GM18951 (cell line): ENCODE measurements at regions of chr19 and their contacts with region 1.

Region 1: GRCh38 chr19:10644260-10645007 is 9.7 kb upstream of the ILF3 start:
- POLR2A ChIP-seq: peak; percentile 29

Region 2: DNA sequence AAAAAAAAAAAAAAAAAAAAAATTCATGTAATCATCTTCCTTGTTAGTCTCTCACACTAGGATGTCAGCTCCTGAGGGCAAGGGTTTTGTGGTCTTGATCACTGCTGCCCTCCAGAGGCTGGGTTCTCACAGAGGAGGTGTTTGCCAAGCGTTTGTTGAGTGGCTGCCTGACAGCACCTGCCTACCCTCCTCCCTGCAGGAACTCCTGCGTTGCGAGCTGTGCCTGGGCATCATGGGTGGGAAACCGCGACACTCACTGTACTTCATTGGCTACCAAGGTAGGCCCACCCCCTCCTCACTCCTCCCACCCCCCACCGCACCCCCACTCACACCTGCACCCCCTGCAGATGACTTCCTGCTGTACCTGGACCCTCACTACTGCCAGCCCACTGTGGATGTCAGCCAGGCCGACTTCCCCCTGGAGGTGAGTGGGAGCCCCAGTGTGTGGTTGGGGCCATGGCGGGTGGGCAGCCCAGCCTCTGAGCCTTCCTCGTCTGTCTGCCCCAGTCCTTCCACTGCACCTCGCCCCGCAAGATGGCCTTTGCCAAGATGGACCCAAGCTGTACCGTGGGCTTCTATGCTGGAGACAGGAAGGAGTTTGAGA is 92.6 kb before region 1 on chr19:
- in situ Hi-C with region 1: no loop called
- POLR2A ChIP-seq: no peak

Region 3: DNA sequence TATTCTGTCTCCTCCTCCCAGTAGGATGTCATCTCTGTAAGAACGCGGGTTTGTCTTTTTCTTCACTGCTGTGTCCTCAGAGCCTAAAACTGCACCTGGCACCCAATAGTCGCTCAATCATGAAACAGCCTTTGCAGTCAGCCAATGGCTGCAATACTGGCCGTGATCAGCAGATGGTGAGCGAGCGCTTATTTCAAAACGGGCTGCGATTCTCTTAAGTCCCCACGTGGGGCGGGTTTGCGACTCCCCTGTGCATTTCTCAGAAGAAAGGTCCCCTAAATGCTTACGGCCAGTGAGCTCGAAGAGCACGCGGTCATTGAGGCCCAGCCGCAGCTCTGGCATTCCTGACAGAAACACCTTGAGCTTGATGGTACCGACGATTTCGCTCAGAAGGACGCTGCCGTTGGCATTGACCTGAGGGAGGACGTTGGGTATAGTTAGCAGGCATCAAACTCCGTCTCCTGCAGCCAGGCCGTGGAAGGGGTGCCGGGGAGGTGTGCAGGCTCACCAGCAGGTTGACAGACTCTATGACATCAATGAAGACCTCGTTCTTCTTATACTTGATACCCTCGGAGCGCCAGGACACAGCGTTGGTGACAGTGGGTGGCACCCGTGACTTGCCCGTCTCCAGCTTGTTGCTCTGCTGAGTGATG is 63.3 kb before region 1 on chr19:
- in situ Hi-C with region 1: loop called (anchors 5 kb)
- POLR2A ChIP-seq: no peak